Calu3 (cell line): ENCODE measurements at regions of chr2 and their contacts with region 1.

Region 1: DNA sequence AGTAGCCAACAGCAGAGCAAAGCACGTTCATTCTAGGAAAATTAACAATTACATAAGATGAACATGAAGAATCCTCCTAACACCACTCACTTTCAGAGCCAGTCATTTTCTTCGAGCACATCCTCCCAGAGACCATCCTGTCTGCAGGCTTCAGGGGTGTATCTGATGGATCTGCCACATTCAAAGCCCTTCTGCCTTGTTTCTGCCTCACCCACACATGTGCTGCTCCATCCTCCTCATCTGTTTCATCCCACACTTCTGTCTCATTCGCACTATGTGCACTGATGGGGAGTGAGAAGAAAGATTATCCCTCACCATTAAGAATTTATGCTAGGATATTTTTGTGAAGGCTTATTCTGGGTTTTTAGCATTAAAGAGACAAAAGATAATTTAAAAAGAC is 287.9 kb upstream of the PKDCC start:
- DNase-seq: no peak
- H3K4me3 Mint-ChIP-seq: no peak overlapping the region
- H3K27ac Mint-ChIP-seq: no peak overlapping the region
- H3K4me1 Mint-ChIP-seq: no peaks in the 10 kb centered on the region
- H3K27me3 Mint-ChIP-seq: no peaks in the 10 kb centered on the region
- CTCF ChIP-seq: no peak

Region 2: GRCh38 chr2:41668529-41668928 is 91.4 kb before region 1 on chr2:
- CTCF ChIA-PET with region 1: interaction called, 11 read pairs
- intact Hi-C with region 1: no loop called
- DNase-seq: no peak
- H3K4me3 Mint-ChIP-seq: no peak overlapping the region
- H3K27ac Mint-ChIP-seq: no peak overlapping the region
- H3K4me1 Mint-ChIP-seq: no peaks in the 10 kb centered on the region
- H3K27me3 Mint-ChIP-seq: peaks cover 20% of the 10 kb centered on the region
- CTCF ChIP-seq: no peak